ENCODE measurements at regions of chr7 and their contacts with region 1.

Region 1: GRCh38 chr7:81298951-81299669 is 380.3 kb upstream of the SEMA3C start:
- DNase-seq: peak; percentile 45 to 94
- H3K4me3 ChIP-seq: peak overlapping the region; percentile 17; the same call in 1 of the 2 replicates
- H3K27ac ChIP-seq: peak overlapping the region; percentile 31
- H3K4me1 ChIP-seq: peaks cover 21% of the 10 kb centered on the region
- H3K27me3 ChIP-seq: no peaks in the 10 kb centered on the region
- CTCF ChIP-seq: no peak

Region 2: GRCh38 chr7:81161458-81162075 is 137.5 kb before region 1 on chr7:
- CTCF ChIA-PET with region 1: no interaction called
- POLR2A ChIA-PET with region 1: no interaction called
- intact Hi-C with region 1: loop called (anchors 5 kb)
- DNase-seq: peak; percentile 54 to 66
- H3K4me3 ChIP-seq: no peak overlapping the region
- H3K27ac ChIP-seq: no peak overlapping the region
- H3K4me1 ChIP-seq: peaks cover 10% of the 10 kb centered on the region; the same call in 1 of the 2 replicates
- H3K27me3 ChIP-seq: no peaks in the 10 kb centered on the region
- CTCF ChIP-seq: no peak

Region 3: DNA sequence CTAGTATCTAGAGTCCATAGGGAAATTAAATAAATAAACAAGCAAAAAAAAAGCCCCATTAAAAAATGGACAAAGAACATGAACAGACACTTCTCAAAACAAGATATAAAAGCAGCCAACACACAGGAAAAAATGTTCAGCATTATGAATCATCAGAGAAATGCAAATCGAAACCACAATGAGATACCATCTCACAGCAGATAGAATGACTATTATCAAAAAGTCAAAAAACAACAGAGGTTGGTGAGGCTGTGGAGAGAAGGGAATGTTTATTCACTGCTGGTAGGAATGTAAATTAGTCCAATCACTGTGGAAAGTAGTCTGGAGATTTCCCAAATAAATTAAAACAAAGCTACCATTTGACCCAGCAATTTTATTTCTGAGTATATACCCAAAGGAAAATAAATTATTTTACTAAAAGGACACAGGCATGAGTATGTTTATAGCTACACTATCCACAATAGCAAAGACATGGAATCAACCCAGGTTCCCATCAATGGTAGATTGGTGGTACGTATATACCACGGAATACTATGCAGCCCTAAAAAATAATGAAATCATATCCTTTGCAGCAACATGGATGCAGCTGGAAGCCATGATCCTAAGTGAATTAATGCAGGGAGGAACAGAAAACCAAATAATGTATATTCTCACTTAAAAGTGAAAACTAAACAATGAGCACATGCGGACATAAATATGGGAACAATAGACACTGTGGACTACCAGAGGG is 13.8 kb before region 1 on chr7:
- CTCF ChIA-PET with region 1: interaction called, 3 read pairs
- POLR2A ChIA-PET with region 1: no interaction called
- intact Hi-C with region 1: loop called (anchors 1 kb)
- DNase-seq: peak; percentile 9 to 68
- H3K4me3 ChIP-seq: no peak overlapping the region
- H3K27ac ChIP-seq: peak overlapping the region; percentile 47
- H3K4me1 ChIP-seq: peaks cover 10% of the 10 kb centered on the region
- H3K27me3 ChIP-seq: no peaks in the 10 kb centered on the region
- CTCF ChIP-seq: no peak

Region 4: GRCh38 chr7:81367335-81367931 is 68.3 kb after region 1 on chr7:
- CTCF ChIA-PET with region 1: no interaction called
- POLR2A ChIA-PET with region 1: no interaction called
- intact Hi-C with region 1: no loop called
- DNase-seq: no peak
- H3K4me3 ChIP-seq: no peak overlapping the region
- H3K27ac ChIP-seq: no peak overlapping the region
- H3K4me1 ChIP-seq: no peaks in the 10 kb centered on the region
- H3K27me3 ChIP-seq: no peaks in the 10 kb centered on the region
- CTCF ChIP-seq: no peak

Region 5: GRCh38 chr7:81447351-81447952 is 148.3 kb after region 1 on chr7:
- CTCF ChIA-PET with region 1: no interaction called
- POLR2A ChIA-PET with region 1: no interaction called
- intact Hi-C with region 1: loop called (anchors 5 kb)
- DNase-seq: peak in 1 of 2 experiments; percentile 12
- H3K4me3 ChIP-seq: no peak overlapping the region
- H3K27ac ChIP-seq: no peak overlapping the region
- H3K4me1 ChIP-seq: no peaks in the 10 kb centered on the region
- H3K27me3 ChIP-seq: no peaks in the 10 kb centered on the region
- CTCF ChIP-seq: peak; percentile 64

Measured in PC-9 (cell line).